K562 (cell line): ENCODE measurements at regions of chrX and their contacts with region 1.

Region 1: DNA sequence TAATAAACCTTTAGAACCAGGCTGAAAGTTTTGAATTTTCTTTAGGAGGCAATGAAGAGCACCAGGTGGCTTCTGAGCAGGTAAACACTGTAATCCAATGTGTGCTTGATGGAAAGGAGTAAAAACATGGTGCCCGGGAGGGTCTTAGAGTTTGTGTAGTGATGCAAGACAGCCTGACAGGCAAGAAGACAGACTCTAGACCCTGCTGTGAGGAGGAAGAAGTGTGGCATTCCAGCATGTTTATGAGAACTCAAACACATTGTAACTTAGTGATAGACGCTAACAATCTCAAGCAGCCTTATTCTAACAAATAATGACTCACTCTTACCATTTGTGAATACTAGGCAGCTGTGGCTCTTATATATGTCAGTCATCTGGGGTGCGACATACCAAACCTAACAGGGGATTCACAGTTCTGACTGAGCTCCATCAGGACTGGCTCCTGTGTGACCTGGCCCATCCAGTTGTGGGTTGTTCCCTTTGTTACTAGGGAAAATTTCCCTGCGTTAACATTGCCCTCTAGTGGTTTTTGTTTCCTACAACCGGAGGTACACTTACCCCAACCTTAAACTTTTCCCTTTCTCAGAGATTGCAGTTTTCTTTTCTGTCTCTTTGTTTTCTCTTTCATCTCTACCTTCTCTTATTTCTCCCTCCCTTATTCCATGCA is 53.8 kb downstream of the VSIG4 start:
- DNase-seq: peak; percentile 50 to 85 (median 64)
- ATAC-seq: peak; percentile 93
- H3K4me3 ChIP-seq: no peak overlapping the region
- H3K27ac ChIP-seq: peak overlapping the region; percentile 71
- H3K4me1 ChIP-seq: peaks cover 5 to 50% of the 10 kb centered on the region in 2 experiments; a peak in 4 of 5 replicates
- H3K27me3 ChIP-seq: no peaks in the 10 kb centered on the region
- CTCF ChIP-seq: peak; percentile 64 to 73 (median 66)
- EP300 ChIP-seq: no peak
- POLR2A ChIP-seq: no peak
- RAD21 ChIP-seq: peak; percentile 78 to 86

Region 2: DNA sequence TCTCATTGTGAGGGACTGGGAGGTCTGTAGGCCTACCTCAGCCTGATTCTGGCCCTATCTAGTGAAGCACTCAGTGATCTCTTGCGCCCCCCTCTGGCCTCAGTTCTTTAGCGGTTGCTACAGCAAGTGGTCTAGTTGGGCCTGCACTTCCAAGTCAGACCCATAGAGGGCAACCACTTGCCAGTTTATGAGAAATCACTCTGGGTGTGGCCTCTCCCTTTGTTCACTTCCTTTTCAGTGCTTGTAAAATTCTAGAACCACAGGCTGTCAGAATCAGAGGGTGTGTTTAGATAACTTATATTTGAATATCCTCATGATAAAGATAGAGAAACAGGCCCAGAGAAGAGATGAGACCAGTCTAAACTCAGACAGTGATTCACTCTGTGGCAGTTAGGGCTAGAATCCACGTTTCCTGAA is 390.6 kb before region 1 on chrX:
- CTCF ChIA-PET with region 1: interaction called, 3 read pairs
- POLR2A ChIA-PET with region 1: no interaction called
- in situ Hi-C with region 1: no loop called
- intact Hi-C with region 1: loop called (anchors 1 kb)
- DNase-seq: peak; percentile 84 to 96 (median 85)
- ATAC-seq: peak; percentile 96
- H3K4me3 ChIP-seq: no peak overlapping the region
- H3K27ac ChIP-seq: peak overlapping the region; percentile 22; the same call in 2 of the 3 replicates
- H3K4me1 ChIP-seq: peaks cover 4 to 25% of the 10 kb centered on the region in 2 experiments; a peak in 3 of 5 replicates
- H3K27me3 ChIP-seq: no peaks in the 10 kb centered on the region
- CTCF ChIP-seq: peak; percentile 99 to 100 (median 100)
- EP300 ChIP-seq: peak; percentile 22; the same call in 1 of the 2 replicates
- POLR2A ChIP-seq: no peak
- RAD21 ChIP-seq: peak; percentile 93 to 96

Region 3: GRCh38 chrX:65745992-65746391 is 240.1 kb before region 1 on chrX:
- CTCF ChIA-PET with region 1: interaction called, 4 read pairs
- POLR2A ChIA-PET with region 1: interaction called, 3 read pairs
- in situ Hi-C with region 1: no loop called
- intact Hi-C with region 1: loop called (anchors 2 kb)
- DNase-seq: peak in 1 of 4 experiments; percentile 56
- ATAC-seq: peak; percentile 63
- H3K4me3 ChIP-seq: no peak overlapping the region
- H3K27ac ChIP-seq: no peak overlapping the region
- H3K4me1 ChIP-seq: no peaks in the 10 kb centered on the region; a peak in 1 of 5 replicates
- H3K27me3 ChIP-seq: no peaks in the 10 kb centered on the region
- CTCF ChIP-seq: peak; percentile 39 to 68 (median 40); a peak in 4 of 6 replicates
- EP300 ChIP-seq: no peak
- POLR2A ChIP-seq: no peak
- RAD21 ChIP-seq: peak; percentile 53 to 71

Region 4: GRCh38 chrX:65932176-65933084 is 53.6 kb before region 1 on chrX:
- CTCF ChIA-PET with region 1: no interaction called
- POLR2A ChIA-PET with region 1: no interaction called
- in situ Hi-C with region 1: no loop called
- intact Hi-C with region 1: loop called (anchors 1 kb)
- DNase-seq: peak in 3 of 4 experiments; percentile 9 to 67 (median 17)
- ATAC-seq: peak; percentile 97
- H3K4me3 ChIP-seq: no peak overlapping the region
- H3K27ac ChIP-seq: no peak overlapping the region; the same call in 2 of the 3 replicates
- H3K4me1 ChIP-seq: no peaks in the 10 kb centered on the region; a peak in 1 of 5 replicates
- H3K27me3 ChIP-seq: no peaks in the 10 kb centered on the region
- CTCF ChIP-seq: peak; percentile 38 to 55 (median 39); a peak in 4 of 6 replicates
- EP300 ChIP-seq: no peak
- POLR2A ChIP-seq: no peak
- RAD21 ChIP-seq: peak; percentile 17 to 55; a peak in 2 of 4 replicates

Region 5: GRCh38 chrX:66163849-66164411 is 177.9 kb after region 1 on chrX and contains the start of gene HEPH:
- CTCF ChIA-PET with region 1: no interaction called
- POLR2A ChIA-PET with region 1: no interaction called
- in situ Hi-C with region 1: no loop called
- intact Hi-C with region 1: loop called (anchors 1 kb)
- DNase-seq: peak; percentile 54 to 79 (median 68)
- ATAC-seq: peak; percentile 76
- H3K4me3 ChIP-seq: peak within 1 kb of the TSS; percentile 66
- H3K27ac ChIP-seq: peak within 1 kb of the TSS; percentile 89
- H3K4me1 ChIP-seq: peaks cover 0 to 20% of the 10 kb centered on the region in 2 experiments; a peak in 2 of 5 replicates
- H3K27me3 ChIP-seq: no peaks in the 10 kb centered on the region
- CTCF ChIP-seq: no peak
- EP300 ChIP-seq: peak; percentile 45
- POLR2A ChIP-seq: peak; percentile 72
- RAD21 ChIP-seq: no peak
- polyA plus RNA-seq, gene HEPH: 22.4 to 46.9 TPM